A673 (cell line): ENCODE measurements at regions of chr12 and their contacts with region 1.

Region 1: GRCh38 chr12:11039171-11039570 is 8.0 kb upstream of the TAS2R31 start:
- DNase-seq: no peak
- H3K4me3 ChIP-seq: no peak overlapping the region
- H3K27ac ChIP-seq: no peak overlapping the region
- H3K4me1 ChIP-seq: peaks cover 3% of the 10 kb centered on the region
- H3K27me3 ChIP-seq: no peaks in the 10 kb centered on the region
- CTCF ChIP-seq: no peak

Region 2: GRCh38 chr12:10910380-10910779 is 128.8 kb before region 1 on chr12:
- CTCF ChIA-PET with region 1: no interaction called
- POLR2A ChIA-PET with region 1: no interaction called
- intact Hi-C with region 1: no loop called
- DNase-seq: no peak
- H3K4me3 ChIP-seq: no peak overlapping the region
- H3K27ac ChIP-seq: no peak overlapping the region
- H3K4me1 ChIP-seq: no peaks in the 10 kb centered on the region
- H3K27me3 ChIP-seq: no peaks in the 10 kb centered on the region
- CTCF ChIP-seq: no peak

Region 3: DNA sequence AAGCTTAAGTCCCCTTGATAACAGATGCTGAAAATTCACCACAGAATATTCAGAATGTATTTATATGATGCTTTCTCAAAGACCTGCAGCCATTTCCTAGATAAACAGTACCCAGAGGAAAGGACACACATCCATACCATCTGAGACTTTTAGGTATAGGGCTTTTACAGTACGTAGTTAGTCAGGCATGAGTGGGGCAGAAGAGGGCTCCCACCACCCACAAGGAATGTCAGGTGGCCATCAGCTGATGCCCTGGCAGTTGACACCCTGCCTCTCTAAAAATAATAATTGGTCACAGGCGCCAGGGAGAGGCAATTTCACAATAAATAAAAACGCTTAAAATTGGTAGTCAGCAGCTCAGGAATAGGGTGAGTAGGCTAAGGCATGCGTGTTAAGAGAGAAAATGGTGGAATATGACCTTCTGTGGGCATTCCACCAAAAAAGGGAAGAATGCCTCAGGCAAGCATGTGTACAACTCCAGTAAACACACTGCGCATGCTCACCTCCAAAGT is 30.7 kb after region 1 on chr12:
- CTCF ChIA-PET with region 1: no interaction called
- POLR2A ChIA-PET with region 1: interaction called, 5 read pairs
- intact Hi-C with region 1: loop called (anchors 2 kb)
- DNase-seq: no peak
- H3K4me3 ChIP-seq: no peak overlapping the region
- H3K27ac ChIP-seq: no peak overlapping the region
- H3K4me1 ChIP-seq: no peaks in the 10 kb centered on the region
- H3K27me3 ChIP-seq: no peaks in the 10 kb centered on the region
- CTCF ChIP-seq: no peak

Region 4: DNA sequence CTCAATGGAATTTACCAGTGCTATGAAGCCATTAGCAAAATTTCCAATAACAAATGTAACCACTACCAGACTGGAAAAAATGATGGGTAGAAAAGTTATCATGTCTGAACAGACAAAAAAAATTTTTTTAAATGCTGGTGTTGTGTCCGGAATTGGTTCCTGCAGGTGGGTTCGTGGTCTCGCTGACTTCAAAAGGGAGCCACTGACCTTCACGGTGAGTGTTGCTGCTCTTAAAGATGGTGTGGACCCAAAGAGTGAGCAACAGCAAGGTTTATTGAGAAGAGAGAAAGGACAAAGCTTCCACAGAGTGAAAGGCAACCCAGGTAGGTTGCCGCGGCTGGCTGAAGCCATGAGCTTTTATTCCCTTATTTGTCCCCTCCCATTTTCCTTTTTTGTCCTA is 53.0 kb after region 1 on chr12 and contains the start of gene TAS2R43:
- CTCF ChIA-PET with region 1: no interaction called
- POLR2A ChIA-PET with region 1: no interaction called
- intact Hi-C with region 1: loop called (anchors 5 kb)
- DNase-seq: no peak
- H3K4me3 ChIP-seq: no peak within 1 kb of the TSS
- H3K27ac ChIP-seq: no peak within 1 kb of the TSS
- H3K4me1 ChIP-seq: no peaks in the 10 kb centered on the region
- H3K27me3 ChIP-seq: no peaks in the 10 kb centered on the region
- CTCF ChIP-seq: no peak
- total RNA-seq, gene TAS2R43: 2.3 and 2.6 TPM in 2 replicates